ENCODE measurements at regions of chr4 and their contacts with region 1.

Region 1: DNA sequence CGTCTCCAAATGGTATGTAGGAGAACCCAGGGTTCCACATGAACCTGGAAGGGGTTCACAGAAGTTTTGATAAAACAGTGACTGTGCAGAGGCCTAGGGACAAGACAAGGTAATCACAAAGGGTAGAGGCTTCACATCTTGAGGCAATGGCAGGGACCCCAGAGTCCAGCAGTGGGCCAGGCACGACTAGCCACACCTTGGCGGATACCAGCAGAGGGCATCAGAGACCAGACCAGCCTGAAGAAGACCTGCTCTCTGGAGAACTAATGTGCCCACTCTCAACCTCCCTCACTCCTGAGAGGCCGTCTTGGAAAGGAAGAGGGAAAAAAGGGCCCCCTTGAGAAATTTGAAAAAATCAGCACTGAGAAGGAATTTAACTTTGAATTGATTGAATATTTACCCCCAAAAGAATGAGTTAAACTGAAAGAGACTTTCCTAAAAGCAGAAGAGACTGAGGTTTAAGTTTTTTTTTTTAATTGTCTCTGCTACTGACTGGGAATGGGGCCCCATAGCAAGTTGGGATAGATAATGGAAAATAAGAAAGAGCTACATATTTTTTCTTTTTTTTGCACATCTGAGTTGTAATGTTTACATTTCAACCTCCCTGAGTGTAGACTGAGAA is 243.8 kb upstream of the JADE1 start:
- DNase-seq: peak; percentile 51
- ATAC-seq: peak; percentile 99
- H3K4me3 ChIP-seq: no peak overlapping the region
- H3K27ac ChIP-seq: no peak overlapping the region
- H3K4me1 ChIP-seq: peaks cover 8% of the 10 kb centered on the region; the same call in 1 of the 2 replicates
- H3K27me3 ChIP-seq: no peaks in the 10 kb centered on the region; a peak in 1 of 5 replicates
- CTCF ChIP-seq: peak; percentile 82
- EP300 ChIP-seq: no peak
- POLR2A ChIP-seq: no peak
- RAD21 ChIP-seq: peak; percentile 82

Region 2: GRCh38 chr4:128512121-128512520 is 53.6 kb before region 1 on chr4:
- CTCF ChIA-PET with region 1: no interaction called
- POLR2A ChIA-PET with region 1: no interaction called
- in situ Hi-C with region 1: no loop called
- intact Hi-C with region 1: no loop called
- DNase-seq: no peak
- ATAC-seq: no peak
- H3K4me3 ChIP-seq: no peak overlapping the region
- H3K27ac ChIP-seq: no peak overlapping the region
- H3K4me1 ChIP-seq: peaks cover 2% of the 10 kb centered on the region
- H3K27me3 ChIP-seq: no peaks in the 10 kb centered on the region
- CTCF ChIP-seq: no peak
- EP300 ChIP-seq: no peak
- POLR2A ChIP-seq: no peak
- RAD21 ChIP-seq: no peak

Region 3: DNA sequence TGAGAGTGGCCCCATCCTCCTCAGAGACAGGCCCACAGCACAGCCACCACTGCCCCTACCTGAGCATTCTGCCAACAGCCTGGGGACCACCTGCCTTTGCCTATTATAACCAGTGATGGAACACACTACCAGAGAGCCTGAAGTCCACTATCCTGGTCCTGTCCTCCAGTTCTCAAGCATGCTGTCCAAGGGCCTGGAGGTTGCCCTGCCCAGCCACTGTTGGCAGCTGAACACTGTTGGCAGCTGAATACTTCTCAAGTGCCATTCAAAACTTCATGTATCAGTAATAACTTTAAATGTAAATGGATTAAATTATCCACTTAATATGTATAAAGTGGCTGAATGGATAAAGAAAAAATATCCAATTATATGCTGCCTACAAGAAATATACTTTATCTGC is 49.5 kb after region 1 on chr4:
- CTCF ChIA-PET with region 1: no interaction called
- POLR2A ChIA-PET with region 1: no interaction called
- in situ Hi-C with region 1: no loop called
- intact Hi-C with region 1: loop called (anchors 2 kb)
- DNase-seq: no peak
- ATAC-seq: no peak
- H3K4me3 ChIP-seq: no peak overlapping the region
- H3K27ac ChIP-seq: no peak overlapping the region
- H3K4me1 ChIP-seq: no peaks in the 10 kb centered on the region
- H3K27me3 ChIP-seq: no peaks in the 10 kb centered on the region
- CTCF ChIP-seq: no peak
- EP300 ChIP-seq: no peak
- POLR2A ChIP-seq: no peak
- RAD21 ChIP-seq: no peak

Measured in HepG2 (cell line).